Activated CD4-positive, alpha-beta memory T cell treated with anti-CD3 and anti-CD28 coated beads for 36 hours (primary cell): ENCODE measurements at regions of chr1 and their contacts with region 1.

Region 1: GRCh38 chr1:15820478-15820877 is 13.0 kb upstream of the UQCRHL start:
- DNase-seq: no peak
- H3K4me3 Mint-ChIP-seq: no peak overlapping the region
- H3K27ac Mint-ChIP-seq: no peak overlapping the region
- H3K4me1 Mint-ChIP-seq: peaks cover 3% of the 10 kb centered on the region
- H3K27me3 Mint-ChIP-seq: no peaks in the 10 kb centered on the region

Region 2: DNA sequence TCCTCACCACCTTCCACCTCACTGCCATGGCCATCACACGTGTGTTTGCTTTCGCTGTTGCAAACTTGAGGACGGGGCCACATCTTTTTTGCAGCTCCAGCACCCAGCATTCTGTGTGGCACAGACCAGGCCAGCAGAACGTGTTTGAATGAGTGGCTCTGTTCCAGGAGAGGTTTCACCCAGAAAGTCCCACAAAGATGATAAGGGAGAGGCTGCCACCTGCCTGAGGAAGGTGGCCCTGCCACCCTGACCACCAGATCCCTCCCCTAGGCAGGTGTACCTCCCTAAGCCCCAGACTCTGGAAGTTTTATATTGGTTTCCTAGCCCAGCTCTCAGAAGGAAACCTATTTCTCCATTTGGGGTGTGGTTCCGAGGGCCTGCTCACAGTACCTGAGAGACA is 969.9 kb before region 1 on chr1:
- CTCF ChIA-PET with region 1: no interaction called
- POLR2A ChIA-PET with region 1: no interaction called
- intact Hi-C with region 1: no loop called
- DNase-seq: no peak
- H3K4me3 Mint-ChIP-seq: no peak overlapping the region
- H3K27ac Mint-ChIP-seq: no peak overlapping the region
- H3K4me1 Mint-ChIP-seq: no peaks in the 10 kb centered on the region
- H3K27me3 Mint-ChIP-seq: no peaks in the 10 kb centered on the region

Region 3: DNA sequence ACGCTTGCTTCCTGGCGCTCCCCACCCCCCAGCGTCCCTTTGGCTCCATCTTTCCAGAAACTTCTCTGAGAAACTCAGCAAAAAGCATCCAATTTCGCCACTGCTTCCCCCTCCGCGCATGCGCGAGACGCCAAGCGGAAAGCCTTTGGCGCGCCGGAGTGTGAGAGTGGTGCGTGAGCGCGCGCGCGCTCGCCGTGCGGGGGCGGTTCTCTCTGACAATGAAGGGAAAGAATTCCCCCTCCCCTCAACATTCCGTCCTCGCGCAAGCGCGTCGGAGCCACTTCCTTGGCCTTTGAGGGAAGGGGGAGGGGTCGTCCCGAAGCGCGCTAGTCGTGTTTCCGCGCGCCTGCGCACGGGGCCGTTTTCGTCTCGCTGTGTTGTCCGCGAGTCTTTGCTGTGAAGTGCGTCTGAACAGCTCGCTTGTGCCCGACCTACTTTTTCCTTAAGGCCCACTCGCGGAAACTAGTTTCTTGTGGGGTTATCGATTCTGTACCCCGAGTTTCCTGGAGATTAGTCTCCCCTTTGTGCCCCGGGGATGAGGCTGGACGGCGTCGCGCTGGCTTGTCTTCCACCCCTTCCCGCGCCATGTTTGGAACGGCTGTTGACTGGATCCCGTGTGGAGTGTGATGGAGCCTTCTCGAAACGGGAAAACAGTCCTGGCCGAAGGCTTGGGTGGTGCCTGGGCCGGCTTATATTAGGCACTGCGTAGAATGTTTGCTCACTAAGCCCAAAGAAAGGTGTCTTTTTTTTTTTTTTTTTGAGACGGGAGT is 15.4 kb after region 1 on chr1:
- CTCF ChIA-PET with region 1: interaction called, 10 read pairs
- POLR2A ChIA-PET with region 1: no interaction called
- intact Hi-C with region 1: no loop called
- DNase-seq: peak; percentile 100
- H3K4me3 Mint-ChIP-seq: peak overlapping the region; percentile 81
- H3K27ac Mint-ChIP-seq: peak overlapping the region; percentile 96
- H3K4me1 Mint-ChIP-seq: peaks cover 18% of the 10 kb centered on the region
- H3K27me3 Mint-ChIP-seq: no peaks in the 10 kb centered on the region

Region 4: GRCh38 chr1:15900662-15901279 is 80.3 kb after region 1 on chr1:
- CTCF ChIA-PET with region 1: interaction called, 12 read pairs
- POLR2A ChIA-PET with region 1: no interaction called
- intact Hi-C with region 1: no loop called
- DNase-seq: no peak
- H3K4me3 Mint-ChIP-seq: no peak overlapping the region
- H3K27ac Mint-ChIP-seq: no peak overlapping the region
- H3K4me1 Mint-ChIP-seq: peaks cover 46% of the 10 kb centered on the region
- H3K27me3 Mint-ChIP-seq: no peaks in the 10 kb centered on the region

Region 5: DNA sequence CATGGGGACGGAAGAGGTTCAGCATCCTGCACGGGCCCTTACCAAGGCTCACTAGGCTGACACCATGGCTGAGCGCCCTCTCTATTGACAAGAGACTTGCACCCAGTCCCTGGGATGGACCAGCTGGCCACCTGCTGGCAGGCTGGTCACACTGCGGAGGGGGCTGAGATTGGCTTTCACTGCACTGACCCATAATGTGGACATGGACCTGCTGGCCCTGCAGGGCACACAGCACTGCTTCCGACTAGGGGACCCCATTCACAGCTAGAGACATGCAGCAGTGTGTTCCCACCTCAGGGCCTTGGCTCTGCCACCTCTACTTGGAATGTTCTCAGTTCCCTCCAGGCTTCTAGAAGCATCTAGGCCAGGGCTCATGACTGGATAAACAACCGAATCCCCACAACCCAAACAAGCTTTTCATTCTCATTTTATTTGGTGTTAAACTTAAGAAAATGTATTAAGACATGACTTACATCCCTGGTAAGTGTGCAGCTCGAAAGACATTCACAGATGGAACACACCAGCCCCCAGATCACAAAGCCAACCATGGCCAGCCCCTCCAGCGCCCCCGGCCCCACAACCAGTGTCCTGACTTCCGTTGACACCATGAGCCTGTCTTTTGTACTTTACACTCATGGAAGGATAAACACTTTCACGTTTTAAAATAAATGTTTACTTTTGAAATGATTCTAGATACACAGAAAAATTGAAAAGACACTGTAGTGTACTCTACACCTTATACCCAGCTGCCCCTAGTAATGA is 174.3 kb after region 1 on chr1:
- CTCF ChIA-PET with region 1: interaction called, 19 read pairs
- POLR2A ChIA-PET with region 1: no interaction called
- intact Hi-C with region 1: loop called (anchors 1 kb)
- DNase-seq: peak; percentile 72
- H3K4me3 Mint-ChIP-seq: no peak overlapping the region
- H3K27ac Mint-ChIP-seq: no peak overlapping the region
- H3K4me1 Mint-ChIP-seq: no peaks in the 10 kb centered on the region
- H3K27me3 Mint-ChIP-seq: no peaks in the 10 kb centered on the region